ENCODE measurements at regions of chr18 and their contacts with region 1.

Region 1: DNA sequence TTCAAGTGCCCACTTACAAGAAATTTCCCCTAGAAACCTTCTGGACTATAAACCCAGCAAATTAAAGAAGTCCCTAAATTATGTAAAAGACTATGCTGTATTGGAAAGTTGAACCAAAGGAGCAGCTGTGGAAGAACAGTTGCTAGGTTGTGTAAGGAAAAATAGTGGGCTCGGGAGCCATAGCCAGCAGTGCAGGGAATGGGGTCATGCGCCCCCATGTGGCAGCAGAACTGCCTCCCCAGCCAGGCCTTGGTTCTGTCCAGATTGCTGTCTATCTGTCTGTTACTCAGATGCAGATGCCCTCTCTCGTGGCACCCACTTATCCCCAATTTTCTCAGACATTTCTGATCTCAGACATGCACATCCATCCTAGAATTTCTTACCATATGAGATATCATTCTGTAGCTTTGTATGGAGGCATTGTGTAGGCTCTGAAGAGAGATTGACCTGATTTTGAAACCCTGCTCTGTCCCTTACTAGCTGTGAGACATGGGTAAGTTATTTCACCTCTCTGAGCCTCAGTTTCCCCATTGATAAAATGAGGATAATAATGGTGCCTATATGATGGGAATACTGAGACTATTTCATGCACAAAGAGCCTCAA is 258.3 kb downstream of the SS18 start:
- DNase-seq: peak; percentile 12 to 39
- ATAC-seq: peak; percentile 34 to 71
- H3K4me3 ChIP-seq: no peak overlapping the region
- H3K27ac ChIP-seq: no peak overlapping the region
- H3K4me1 ChIP-seq: peaks cover 0 to 4% of the 10 kb centered on the region in 2 donors
- H3K27me3 ChIP-seq: no peaks in the 10 kb centered on the region
- CTCF ChIP-seq: peak; percentile 32 to 67 (median 61)
- POLR2A ChIP-seq: no peak

Region 2: GRCh38 chr18:25099895-25100294 is 732.2 kb before region 1 on chr18:
- in situ Hi-C with region 1: loop called in 1 of 4 experiments (anchors 25 kb)
- intact Hi-C with region 1: no loop called
- DNase-seq: no peak
- ATAC-seq: no peak
- H3K4me3 ChIP-seq: no peak overlapping the region
- H3K27ac ChIP-seq: no peak overlapping the region
- H3K4me1 ChIP-seq: peaks cover 4 to 23% of the 10 kb centered on the region in 2 donors
- H3K27me3 ChIP-seq: no peaks in the 10 kb centered on the region
- CTCF ChIP-seq: no peak
- POLR2A ChIP-seq: no peak

Region 3: DNA sequence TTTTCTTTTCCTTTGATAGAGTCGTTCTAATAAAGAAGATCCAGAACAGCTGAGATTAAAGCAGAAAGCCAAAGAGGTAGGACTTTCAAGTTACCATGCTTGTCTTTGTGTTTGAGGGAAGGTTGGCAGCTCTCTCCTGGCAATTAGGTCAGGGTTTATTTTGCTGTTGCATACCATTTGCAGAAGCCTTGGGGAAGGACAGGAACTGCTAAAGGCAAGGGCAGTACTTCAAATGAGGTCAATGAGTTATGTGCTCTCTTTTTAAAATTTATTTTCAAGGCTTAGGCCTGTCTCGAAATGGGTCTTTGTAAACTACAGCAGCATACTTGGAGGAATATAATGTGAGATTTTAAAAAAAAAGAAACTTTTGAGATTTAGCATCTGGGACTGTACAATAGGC is 503.1 kb after region 1 on chr18:
- in situ Hi-C with region 1: no loop called
- intact Hi-C with region 1: no loop called
- DNase-seq: no peak
- ATAC-seq: no peak
- H3K4me3 ChIP-seq: no peak overlapping the region
- H3K27ac ChIP-seq: no peak overlapping the region
- H3K4me1 ChIP-seq: peaks cover 0 to 14% of the 10 kb centered on the region in 2 donors
- H3K27me3 ChIP-seq: no peaks in the 10 kb centered on the region
- CTCF ChIP-seq: no peak
- POLR2A ChIP-seq: no peak

Region 4: GRCh38 chr18:26827581-26827980 is 995.5 kb after region 1 on chr18:
- in situ Hi-C with region 1: no loop called
- intact Hi-C with region 1: no loop called
- DNase-seq: no peak
- ATAC-seq: no peak
- H3K4me3 ChIP-seq: no peak overlapping the region
- H3K27ac ChIP-seq: no peak overlapping the region
- H3K4me1 ChIP-seq: no peaks in the 10 kb centered on the region
- H3K27me3 ChIP-seq: no peaks in the 10 kb centered on the region
- CTCF ChIP-seq: no peak
- POLR2A ChIP-seq: no peak